CD4-positive, alpha-beta memory T cell (primary cell): ENCODE measurements at regions of chr16 and their contacts with region 1.

Region 1: DNA sequence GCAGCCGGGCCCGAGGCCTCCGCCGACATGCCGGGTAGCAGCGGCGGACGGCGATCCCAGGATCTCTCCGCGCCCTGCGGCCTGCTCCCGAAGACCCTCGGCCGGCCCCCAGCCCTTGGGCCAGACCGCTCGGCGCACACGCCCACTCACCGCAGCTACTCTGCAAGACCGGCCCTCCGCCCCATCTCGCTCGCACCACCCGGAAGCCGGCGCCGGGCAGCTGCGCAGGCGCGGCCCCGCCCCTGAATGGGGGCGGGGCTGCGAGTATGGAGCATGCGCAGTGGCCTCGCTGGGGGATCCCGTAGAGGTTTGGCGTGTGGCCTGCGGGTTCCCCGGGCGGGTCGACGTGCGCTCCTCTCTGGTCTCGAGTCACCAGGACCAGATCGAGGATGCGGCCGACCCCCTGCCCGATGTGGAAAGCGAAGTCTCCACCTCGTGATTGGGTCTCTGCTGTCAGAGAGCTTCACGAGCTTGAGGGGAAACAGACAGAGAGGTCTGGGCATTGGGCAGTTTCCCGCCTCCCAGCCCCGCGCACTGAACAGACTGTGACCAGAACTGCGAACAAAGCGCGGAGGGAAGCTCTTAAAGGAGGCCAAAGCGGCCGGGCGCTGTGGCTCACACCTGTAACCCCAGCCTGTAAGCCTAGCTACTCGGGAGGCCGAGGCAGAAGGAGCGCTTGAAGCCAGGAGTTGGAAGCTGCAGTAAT is at the start of gene KCTD13:
- DNase-seq: peak; percentile 83 to 97 (median 90)
- H3K4me3 ChIP-seq: peak within 1 kb of the TSS; percentile 89 to 95
- H3K4me3 Mint-ChIP-seq: peak within 1 kb of the TSS; percentile 88 to 96 (median 94)
- H3K27ac ChIP-seq: peak within 1 kb of the TSS; percentile 77
- H3K27ac Mint-ChIP-seq: peak within 1 kb of the TSS; percentile 88 to 98 (median 97)
- H3K4me1 ChIP-seq: peaks cover 32% of the 10 kb centered on the region
- H3K4me1 Mint-ChIP-seq: peaks cover 22 to 53% (median 30%) of the 10 kb centered on the region in 4 donors
- H3K27me3 ChIP-seq: no peaks in the 10 kb centered on the region
- H3K27me3 Mint-ChIP-seq: no peaks in the 10 kb centered on the region
- total RNA-seq, gene KCTD13: 85.7 to 87.3 TPM

Region 2: GRCh38 chr16:29883987-29884386 is 42.2 kb before region 1 on chr16:
- CTCF ChIA-PET with region 1: no interaction called
- POLR2A ChIA-PET with region 1: no interaction called
- intact Hi-C with region 1: no loop called
- DNase-seq: no peak
- H3K4me3 ChIP-seq: no peak overlapping the region
- H3K4me3 Mint-ChIP-seq: no peak overlapping the region
- H3K27ac ChIP-seq: no peak overlapping the region
- H3K27ac Mint-ChIP-seq: no peak overlapping the region
- H3K4me1 ChIP-seq: no peaks in the 10 kb centered on the region
- H3K4me1 Mint-ChIP-seq: peaks cover 0 to 1% (median 0%) of the 10 kb centered on the region in 4 donors
- H3K27me3 ChIP-seq: no peaks in the 10 kb centered on the region
- H3K27me3 Mint-ChIP-seq: peaks cover 7 to 18% of the 10 kb centered on the region in 2 donors

Region 3: DNA sequence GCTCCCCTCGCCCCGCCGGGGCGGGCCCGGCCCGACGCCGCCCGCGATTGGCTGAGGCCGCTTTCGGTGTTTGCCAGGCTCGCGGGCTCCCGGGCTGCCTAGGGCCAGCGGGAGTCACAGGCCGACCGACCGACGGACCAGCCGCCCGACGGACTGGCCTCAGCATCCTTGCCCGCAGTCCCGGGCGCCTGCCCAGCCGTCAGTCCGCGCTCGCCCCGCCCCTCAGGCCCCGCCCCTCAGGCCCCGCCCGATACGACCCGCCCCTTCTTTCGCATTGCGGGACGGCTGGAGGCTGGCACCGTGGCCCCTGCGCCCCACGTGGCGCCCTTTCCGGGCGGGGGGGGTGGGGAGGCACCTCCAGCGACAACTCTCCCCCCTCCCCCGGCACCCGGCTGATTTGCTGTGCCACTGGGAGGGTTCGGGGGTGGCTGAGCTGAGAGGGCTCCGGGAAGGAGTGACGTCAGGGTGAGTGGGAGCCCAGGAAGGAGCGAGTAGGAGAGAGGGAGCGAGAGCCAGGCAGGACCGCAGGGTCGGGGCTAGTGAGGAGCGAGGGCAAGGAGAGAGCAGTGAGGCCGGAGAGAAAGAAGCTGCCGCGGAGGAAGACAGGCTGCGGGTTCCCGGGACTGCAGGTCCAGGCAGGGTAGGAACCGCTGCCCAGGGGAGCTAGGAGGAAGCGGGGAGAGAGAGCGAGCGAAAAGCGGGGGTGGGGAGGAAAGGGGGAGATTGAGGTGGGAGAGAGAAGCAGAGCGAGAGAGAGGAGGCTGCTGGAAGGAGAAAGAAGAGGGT is 25.9 kb before region 1 on chr16 and contains the start of gene ASPHD1:
- CTCF ChIA-PET with region 1: no interaction called
- POLR2A ChIA-PET with region 1: interaction called, 13 read pairs
- intact Hi-C with region 1: no loop called
- DNase-seq: peak; percentile 74 to 88 (median 80)
- H3K4me3 ChIP-seq: peak within 1 kb of the TSS in 1 of 2 donors; percentile 45
- H3K4me3 Mint-ChIP-seq: peak within 1 kb of the TSS; percentile 47 to 83 (median 72)
- H3K27ac ChIP-seq: no peak within 1 kb of the TSS
- H3K27ac Mint-ChIP-seq: peak within 1 kb of the TSS in 3 of 7 donors; percentile 30 to 41 (median 30)
- H3K4me1 ChIP-seq: peaks cover 15% of the 10 kb centered on the region
- H3K4me1 Mint-ChIP-seq: peaks cover 0 to 5% (median 3%) of the 10 kb centered on the region in 4 donors
- H3K27me3 ChIP-seq: peaks cover 10% of the 10 kb centered on the region
- H3K27me3 Mint-ChIP-seq: peaks cover 18 to 24% of the 10 kb centered on the region in 2 donors
- total RNA-seq, gene ASPHD1: not detected

Region 4: DNA sequence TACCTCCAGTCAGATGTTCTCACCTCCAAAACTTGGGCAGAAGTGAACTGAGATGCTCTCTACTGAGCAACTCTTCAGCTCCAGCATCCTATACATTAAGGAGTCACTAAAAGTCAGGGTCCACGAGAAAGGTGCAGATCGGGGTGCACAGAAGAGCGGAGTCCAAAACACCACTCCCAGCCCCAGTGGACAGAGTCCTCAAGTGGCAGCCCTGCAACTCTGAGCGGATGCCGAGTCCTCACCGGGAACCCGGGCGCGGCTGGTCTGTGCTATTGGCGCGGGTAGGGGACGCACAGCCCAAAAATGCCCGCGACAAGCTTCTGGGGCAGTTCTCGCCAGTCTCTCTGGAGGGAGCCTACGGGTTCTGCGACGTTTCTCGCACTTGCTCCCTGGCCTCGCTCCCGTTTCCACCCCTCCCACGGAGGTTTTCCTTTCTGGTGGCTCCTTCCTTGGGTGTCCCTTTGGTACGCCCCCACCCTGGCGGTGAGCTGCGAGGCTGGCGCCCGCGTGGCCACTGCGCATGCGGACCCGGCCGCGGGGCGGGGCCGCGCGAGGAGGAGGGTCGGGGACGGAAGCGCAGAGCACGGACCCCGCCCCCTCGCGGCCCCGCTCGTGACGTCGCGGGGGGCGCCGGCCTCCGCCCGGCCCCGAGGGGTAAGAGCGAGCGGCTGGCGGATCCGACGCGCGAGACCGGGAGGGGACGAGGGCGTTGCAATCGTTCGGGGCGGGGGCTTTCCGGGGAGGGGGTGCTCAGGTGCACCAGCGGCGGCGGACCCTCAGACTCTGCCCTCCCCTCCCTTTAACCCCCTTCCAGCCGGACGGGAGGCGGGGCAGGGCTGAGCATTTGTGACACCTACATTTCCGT is 35.6 kb after region 1 on chr16 and contains the start of gene TMEM219:
- CTCF ChIA-PET with region 1: interaction called, 9 read pairs
- POLR2A ChIA-PET with region 1: interaction called, 57 read pairs
- intact Hi-C with region 1: loop called (anchors 1 kb)
- DNase-seq: peak; percentile 92 to 98 (median 95)
- H3K4me3 ChIP-seq: peak within 1 kb of the TSS; percentile 75 to 89
- H3K4me3 Mint-ChIP-seq: peak within 1 kb of the TSS; percentile 88 to 95 (median 92)
- H3K27ac ChIP-seq: peak within 1 kb of the TSS; percentile 87
- H3K27ac Mint-ChIP-seq: peak within 1 kb of the TSS; percentile 92 to 99 (median 96)
- H3K4me1 ChIP-seq: peaks cover 19% of the 10 kb centered on the region
- H3K4me1 Mint-ChIP-seq: peaks cover 11 to 30% (median 20%) of the 10 kb centered on the region in 4 donors
- H3K27me3 ChIP-seq: no peaks in the 10 kb centered on the region
- H3K27me3 Mint-ChIP-seq: no peaks in the 10 kb centered on the region
- total RNA-seq, gene TMEM219: 80.8 to 103 TPM

Region 5: DNA sequence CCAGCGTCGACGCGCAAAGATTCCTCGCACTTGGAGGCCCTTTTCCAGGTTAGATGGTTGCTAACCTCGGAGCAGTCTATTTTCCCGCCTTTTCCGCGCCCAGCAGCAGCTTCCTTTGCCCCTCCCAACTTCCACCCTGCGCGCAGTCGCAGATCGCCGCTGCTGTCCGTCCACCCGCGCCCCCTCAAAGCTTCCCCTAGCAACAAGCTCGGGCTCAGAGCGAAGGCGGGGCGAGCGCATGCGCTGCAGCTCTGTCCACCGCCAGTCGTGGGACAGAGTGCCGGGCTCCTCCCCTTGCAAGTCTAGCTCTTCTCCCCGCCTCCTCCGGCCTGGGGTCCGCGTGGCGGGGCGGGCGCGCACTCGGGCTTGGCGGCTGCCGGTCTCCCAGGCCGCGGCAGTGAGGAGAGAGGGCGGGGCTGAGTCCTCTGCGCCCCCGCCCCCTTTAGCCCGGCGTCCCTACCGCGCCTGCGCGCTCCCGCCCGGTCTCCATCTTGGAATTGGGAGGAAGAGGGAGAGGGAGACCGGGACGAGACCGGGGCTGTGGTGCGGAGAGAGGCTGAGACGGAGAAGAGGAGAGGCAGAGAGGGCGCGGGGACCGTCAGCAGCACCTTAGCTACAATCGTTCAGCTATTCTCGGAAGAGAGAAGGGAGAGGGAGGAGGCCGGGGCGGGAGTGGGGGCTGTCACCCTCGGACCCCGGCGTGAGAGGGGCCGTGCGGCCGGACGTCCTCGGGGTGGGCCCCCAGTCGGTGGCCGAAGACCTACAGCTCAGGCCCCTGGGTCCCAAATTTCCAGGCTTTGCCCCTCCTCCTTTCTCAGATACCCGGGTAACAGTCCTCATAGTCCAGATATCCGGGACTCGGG is 47.5 kb after region 1 on chr16 and contains the start of gene TAOK2:
- CTCF ChIA-PET with region 1: interaction called, 3 read pairs
- POLR2A ChIA-PET with region 1: interaction called, 36 read pairs
- intact Hi-C with region 1: loop called (anchors 2 kb)
- DNase-seq: peak; percentile 92 to 94 (median 92)
- H3K4me3 ChIP-seq: peak within 1 kb of the TSS; percentile 74 to 87
- H3K4me3 Mint-ChIP-seq: peak within 1 kb of the TSS; percentile 82 to 97 (median 93)
- H3K27ac ChIP-seq: peak within 1 kb of the TSS; percentile 86
- H3K27ac Mint-ChIP-seq: peak within 1 kb of the TSS; percentile 77 to 97 (median 96)
- H3K4me1 ChIP-seq: peaks cover 36% of the 10 kb centered on the region
- H3K4me1 Mint-ChIP-seq: peaks cover 20 to 49% (median 34%) of the 10 kb centered on the region in 4 donors
- H3K27me3 ChIP-seq: no peaks in the 10 kb centered on the region
- H3K27me3 Mint-ChIP-seq: no peaks in the 10 kb centered on the region
- total RNA-seq, gene TAOK2: 53.8 to 56.0 TPM

Region 6: DNA sequence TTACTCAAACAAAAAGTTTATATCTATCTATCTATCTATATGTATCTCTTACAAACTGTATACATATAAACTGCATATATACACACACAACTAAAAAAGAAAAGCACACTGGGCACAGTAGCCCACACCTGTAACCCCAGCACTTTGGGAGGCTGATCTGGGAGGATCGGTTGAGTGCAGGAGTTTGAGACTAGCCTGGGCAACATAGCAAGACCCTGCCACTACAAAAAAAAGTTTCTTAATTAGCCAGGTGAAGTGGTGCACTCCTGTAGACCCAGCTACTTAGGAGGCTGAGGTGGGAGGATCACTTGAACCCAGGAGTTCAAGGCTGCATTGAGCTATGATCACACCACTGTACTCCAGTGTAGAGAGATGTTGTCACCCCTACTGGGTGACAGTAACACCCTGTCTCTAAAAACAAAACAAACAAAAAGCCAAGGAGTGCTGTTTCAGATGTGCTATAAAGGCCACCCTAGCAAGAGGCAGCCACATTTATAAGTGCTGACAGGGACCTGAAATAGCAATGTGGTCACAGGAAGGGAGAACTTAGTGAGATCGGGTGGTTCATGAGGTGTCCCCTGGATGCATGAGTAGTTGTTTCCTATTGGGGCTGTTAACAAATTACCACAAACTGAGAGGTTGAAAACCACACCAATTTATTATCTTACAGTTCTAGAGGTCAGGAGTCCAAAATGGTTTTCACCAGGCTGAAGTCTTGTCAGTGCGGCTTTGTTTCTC is 424.1 kb after region 1 on chr16:
- CTCF ChIA-PET with region 1: no interaction called
- POLR2A ChIA-PET with region 1: no interaction called
- intact Hi-C with region 1: no loop called
- DNase-seq: no peak
- H3K4me3 ChIP-seq: no peak overlapping the region
- H3K4me3 Mint-ChIP-seq: peak overlapping the region in 2 of 8 donors; percentile 11 to 16
- H3K27ac ChIP-seq: no peak overlapping the region
- H3K27ac Mint-ChIP-seq: peak overlapping the region in 6 of 7 donors; percentile 18 to 87 (median 51)
- H3K4me1 ChIP-seq: peaks cover 16% of the 10 kb centered on the region
- H3K4me1 Mint-ChIP-seq: peaks cover 7 to 27% (median 13%) of the 10 kb centered on the region in 4 donors
- H3K27me3 ChIP-seq: no peaks in the 10 kb centered on the region
- H3K27me3 Mint-ChIP-seq: no peaks in the 10 kb centered on the region